ENCODE measurements at regions of chr18 and their contacts with region 1.

Region 1: GRCh38 chr18:63320046-63320689 is 599 bp upstream of the BCL2 start:
- DNase-seq: peak; percentile 90

Region 2: DNA sequence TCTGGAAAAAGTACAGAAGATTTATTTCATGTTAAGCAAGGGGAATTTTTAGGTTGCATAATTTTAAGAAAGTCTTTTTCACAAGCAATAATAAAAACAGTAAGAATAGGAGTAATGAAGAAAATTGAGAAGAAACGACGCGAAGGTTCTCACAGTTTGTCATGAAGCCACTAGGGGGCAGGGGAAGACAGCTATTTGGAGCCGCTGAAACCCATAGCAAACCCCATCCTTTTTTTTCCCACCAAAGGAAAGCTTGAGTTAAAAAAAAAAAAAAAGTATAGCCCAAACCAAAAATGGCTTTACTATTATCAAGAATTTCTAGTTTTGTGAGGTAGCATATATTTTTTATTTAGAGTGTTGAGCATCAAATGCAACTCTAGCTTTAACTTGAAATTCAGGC is 303.9 kb before region 1 on chr18:
- in situ Hi-C with region 1: loop called (anchors 5 kb)
- DNase-seq: peak; percentile 82

Region 3: DNA sequence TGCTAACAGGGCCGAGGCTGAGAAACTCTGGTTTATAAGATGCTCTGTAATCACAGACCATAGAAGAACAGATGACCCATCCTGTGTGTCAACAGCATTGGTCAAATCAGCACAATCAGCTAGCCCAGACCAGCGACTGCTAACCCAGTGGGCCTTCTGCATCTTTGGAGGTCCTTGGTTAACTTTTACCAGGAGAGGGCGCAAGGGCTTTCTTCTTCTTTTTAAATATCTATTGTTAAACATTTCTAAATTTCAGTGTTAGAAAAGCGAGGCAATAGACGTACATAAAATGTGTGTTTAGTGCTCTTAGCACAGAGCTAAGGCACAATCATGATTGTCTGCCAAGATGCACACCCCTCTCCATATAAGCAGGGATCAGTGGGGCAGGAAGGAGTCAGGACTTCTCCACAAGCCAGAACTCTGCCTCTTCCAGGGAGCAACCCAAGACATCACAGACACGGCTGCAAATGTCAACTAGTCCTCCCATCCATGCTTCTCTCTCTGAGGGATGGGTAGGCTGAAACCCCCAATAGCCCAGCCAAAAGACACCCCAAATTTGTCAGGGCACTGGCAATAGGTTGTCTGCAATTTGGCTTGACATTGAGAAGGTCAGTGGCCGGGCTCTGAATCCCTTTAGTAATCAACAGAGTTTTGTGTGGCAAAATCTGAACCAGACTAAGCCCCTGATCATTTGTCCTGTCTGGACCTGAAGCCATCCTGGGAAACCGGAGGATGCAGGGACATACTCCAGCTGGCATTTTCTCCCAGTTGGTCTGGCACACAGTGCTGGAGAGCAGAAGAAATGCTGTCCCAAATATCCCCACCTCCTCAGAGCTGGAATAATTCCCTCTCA is 188.8 kb before region 1 on chr18:
- in situ Hi-C with region 1: loop called (anchors 25 kb)
- DNase-seq: peak; percentile 55

Region 4: DNA sequence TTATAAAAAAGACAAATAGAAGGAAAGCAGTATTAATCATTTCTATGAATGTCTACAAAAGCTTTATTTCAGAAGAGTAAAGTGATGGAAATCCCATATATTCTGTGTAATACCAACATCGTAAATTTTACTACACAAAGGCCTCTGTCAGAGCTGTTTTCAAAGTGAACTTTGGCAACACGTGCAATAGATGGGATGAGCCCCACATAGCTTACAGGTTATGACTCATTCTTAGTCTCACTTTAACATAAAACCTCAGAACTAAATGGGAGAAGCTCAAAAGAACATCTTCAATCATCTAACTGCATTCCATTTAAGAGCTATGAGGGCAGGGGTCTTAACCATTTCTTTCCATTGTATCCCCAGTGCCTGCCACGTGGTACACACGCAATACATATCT is 90.6 kb after region 1 on chr18:
- in situ Hi-C with region 1: no loop called
- DNase-seq: no peak

Region 5: GRCh38 chr18:63683152-63683551 is 363.0 kb after region 1 on chr18:
- in situ Hi-C with region 1: no loop called
- DNase-seq: no peak

Measured in KBM-7 (cell line).